ENCODE measurements at regions of chrX and their contacts with region 1.

Region 1: DNA sequence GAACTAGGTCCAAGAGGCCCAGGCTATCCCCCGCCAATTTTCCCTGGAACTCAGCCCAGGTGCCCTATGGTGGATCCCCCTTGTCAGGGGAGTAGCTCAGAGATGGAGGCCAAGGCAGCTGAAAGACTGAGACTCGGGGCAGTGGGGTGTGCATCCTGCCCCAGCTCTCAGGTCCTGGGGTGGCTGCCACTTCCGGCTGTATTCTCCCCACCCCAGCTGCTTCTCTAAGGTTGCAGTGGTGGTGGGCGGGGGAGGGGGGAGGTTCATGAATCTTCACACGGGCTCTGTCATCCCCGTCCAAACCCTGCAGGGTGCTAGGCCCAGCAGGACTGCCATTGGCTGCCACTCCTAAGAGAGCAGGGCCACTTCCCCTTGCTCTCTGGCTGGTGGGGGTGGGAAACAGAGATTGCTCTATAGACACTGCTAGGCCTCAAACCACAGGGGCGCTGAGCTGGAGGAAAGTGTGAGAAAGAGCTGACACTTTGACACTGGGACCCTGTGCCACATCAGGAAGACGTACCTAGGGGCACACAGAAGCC is 1.5 kb downstream of the SASH3 start:
- DNase-seq: peak; percentile 70
- ATAC-seq: peak; percentile 82
- H3K4me3 Mint-ChIP-seq: peak overlapping the region; percentile 89
- H3K27ac Mint-ChIP-seq: peak overlapping the region; percentile 94
- H3K4me1 Mint-ChIP-seq: peaks cover 46% of the 10 kb centered on the region
- H3K27me3 Mint-ChIP-seq: no peaks in the 10 kb centered on the region

Region 2: DNA sequence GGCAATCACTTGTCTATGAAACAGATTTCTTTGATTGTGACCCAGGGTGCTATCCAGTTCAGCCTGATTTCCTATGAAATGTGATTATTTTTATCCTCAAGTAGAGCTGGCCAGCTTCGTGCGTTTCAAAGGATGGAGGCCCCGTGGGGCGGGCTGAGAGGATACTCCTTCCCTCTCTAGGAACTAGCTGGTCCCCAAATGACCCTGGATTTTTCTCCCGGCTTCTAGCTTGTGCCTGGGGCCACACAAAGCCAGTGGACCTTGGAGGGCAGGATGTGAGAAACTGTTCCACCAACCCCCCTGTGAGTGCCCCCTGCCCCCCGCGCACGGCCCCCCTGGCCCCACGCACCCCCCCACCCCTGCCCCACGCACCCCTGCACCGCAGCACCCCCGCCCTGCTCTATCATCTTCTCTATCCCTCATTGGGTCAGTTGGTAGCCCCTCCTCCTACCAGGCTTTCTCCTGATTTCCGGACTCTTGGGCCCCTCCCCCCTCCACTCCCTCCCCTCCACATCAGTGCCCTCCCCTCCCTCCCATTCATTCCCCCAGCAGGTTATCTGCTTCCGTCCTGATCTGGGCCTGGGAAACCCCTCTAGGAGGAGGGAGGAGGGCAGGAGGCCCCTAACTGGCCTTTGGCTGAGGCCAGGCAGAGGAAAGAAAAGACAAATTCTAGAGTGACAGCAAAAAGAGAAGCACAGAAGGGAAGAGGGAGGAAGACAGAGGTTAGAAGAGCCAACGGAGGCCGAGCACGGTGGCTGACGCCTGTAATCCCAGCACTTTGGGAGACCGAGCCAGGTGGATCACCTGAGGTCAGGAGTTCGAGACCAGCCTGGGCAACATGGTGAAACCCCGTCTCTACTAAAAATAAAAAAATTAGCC is 39.1 kb before region 1 on chrX:
- POLR2A ChIA-PET with region 1: interaction called, 41 read pairs
- DNase-seq: no peak
- ATAC-seq: no peak
- H3K4me3 Mint-ChIP-seq: peak overlapping the region; percentile 72
- H3K27ac Mint-ChIP-seq: peak overlapping the region; percentile 98
- H3K4me1 Mint-ChIP-seq: peaks cover 52% of the 10 kb centered on the region
- H3K27me3 Mint-ChIP-seq: no peaks in the 10 kb centered on the region

Region 3: GRCh38 chrX:129754056-129755024 is 26.9 kb before region 1 on chrX:
- POLR2A ChIA-PET with region 1: interaction called, 74 read pairs
- DNase-seq: no peak
- ATAC-seq: no peak
- H3K4me3 Mint-ChIP-seq: no peak overlapping the region
- H3K27ac Mint-ChIP-seq: peak overlapping the region; percentile 83
- H3K4me1 Mint-ChIP-seq: peaks cover 40% of the 10 kb centered on the region
- H3K27me3 Mint-ChIP-seq: no peaks in the 10 kb centered on the region

Region 4: DNA sequence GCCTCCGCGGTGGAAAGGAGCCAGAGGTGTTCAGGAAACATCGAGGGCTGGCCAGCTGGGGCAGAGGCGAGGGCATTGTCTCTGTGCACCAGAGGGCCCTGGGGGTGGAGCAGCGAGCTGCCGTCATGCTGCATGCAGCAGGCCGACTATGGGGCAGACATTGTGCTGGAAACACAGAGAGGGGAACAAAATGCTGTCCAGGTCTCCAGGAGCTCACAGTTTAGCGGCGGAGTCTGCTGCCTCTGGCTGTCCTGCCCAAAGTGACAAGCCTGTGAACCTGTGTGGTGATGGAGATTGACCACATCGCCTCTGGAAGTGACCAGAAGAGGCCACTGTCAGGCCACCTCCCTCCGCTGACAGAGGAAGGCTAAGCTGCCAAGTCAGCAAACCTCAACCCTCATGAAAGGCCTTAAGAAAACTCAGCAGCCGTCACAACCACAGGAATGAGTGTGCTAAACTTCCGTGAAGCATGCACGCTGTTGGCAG is 21.6 kb before region 1 on chrX:
- POLR2A ChIA-PET with region 1: interaction called, 74 read pairs
- DNase-seq: peak; percentile 63
- ATAC-seq: peak; percentile 71
- H3K4me3 Mint-ChIP-seq: peak overlapping the region; percentile 39
- H3K27ac Mint-ChIP-seq: peak overlapping the region; percentile 84
- H3K4me1 Mint-ChIP-seq: peaks cover 46% of the 10 kb centered on the region
- H3K27me3 Mint-ChIP-seq: peaks cover 1% of the 10 kb centered on the region

Region 5: GRCh38 chrX:129793604-129794191 is 12.5 kb after region 1 on chrX:
- POLR2A ChIA-PET with region 1: interaction called, 21 read pairs
- DNase-seq: no peak
- ATAC-seq: no peak
- H3K4me3 Mint-ChIP-seq: no peak overlapping the region
- H3K27ac Mint-ChIP-seq: no peak overlapping the region
- H3K4me1 Mint-ChIP-seq: peaks cover 5% of the 10 kb centered on the region
- H3K27me3 Mint-ChIP-seq: no peaks in the 10 kb centered on the region

Region 6: DNA sequence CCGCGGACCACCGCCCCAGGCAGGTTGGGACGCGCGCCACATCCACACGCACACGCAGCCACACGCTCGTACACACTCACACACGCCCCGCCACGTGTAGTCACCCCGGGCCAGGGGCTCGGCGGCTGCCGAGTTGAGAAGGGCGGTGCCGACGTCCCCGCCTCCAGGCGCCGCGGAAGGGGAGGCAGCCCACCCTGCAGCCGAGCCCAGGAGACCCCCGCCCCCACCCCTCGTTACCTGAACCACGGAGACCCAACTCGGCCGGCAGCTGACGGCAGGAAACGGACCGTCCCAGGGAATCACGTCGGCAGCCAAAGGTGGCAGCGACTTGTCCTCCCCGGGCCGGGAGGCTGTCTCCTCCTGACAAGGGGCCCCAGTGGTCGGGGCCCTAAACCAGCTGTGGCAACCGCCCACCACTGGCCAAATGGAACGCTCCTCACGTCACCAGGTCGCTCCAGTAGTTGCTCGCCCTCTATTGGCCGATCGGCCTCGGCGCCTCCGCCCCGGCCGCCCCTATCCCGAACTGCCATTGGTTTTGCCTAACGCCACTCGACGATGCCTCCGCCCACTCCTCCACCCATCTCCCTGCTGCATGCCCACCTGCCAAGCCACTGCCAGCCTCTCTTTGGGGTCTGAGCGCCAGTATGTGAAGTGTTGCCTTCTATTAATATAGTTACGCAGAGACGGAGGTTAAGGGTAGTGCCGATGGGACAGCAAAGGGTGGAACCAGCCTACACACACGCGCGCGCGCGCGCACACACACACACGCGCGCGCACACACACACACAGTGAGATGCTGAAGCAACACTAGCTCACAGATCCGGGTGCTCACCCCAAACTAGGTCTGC is 62.5 kb after region 1 on chrX and contains the start of gene ZDHHC9:
- POLR2A ChIA-PET with region 1: no interaction called
- DNase-seq: peak; percentile 84
- ATAC-seq: peak; percentile 99
- H3K4me3 Mint-ChIP-seq: peak within 1 kb of the TSS; percentile 94
- H3K27ac Mint-ChIP-seq: peak within 1 kb of the TSS; percentile 80
- H3K4me1 Mint-ChIP-seq: peaks cover 13% of the 10 kb centered on the region
- H3K27me3 Mint-ChIP-seq: peaks cover 1% of the 10 kb centered on the region
- total RNA-seq, gene ZDHHC9: 5.7 to 6.7 TPM

Measured in activated naive CD8-positive, alpha-beta T cell treated with anti-CD3 and anti-CD28 coated beads, Interleukin-2, amount 10 ng/mL, durations not matched to agents 7 days and 5 days (primary cell).